ENCODE measurements at regions of chr5 and their contacts with region 1.

Region 1: GRCh38 chr5:180291943-180292831 is at the start of gene MAPK9:
- DNase-seq: no peak
- ATAC-seq: peak; percentile 94
- H3K4me3 ChIP-seq: peak within 1 kb of the TSS; percentile 69 to 84
- H3K27ac ChIP-seq: peak within 1 kb of the TSS; percentile 63; the same call in 1 of the 2 replicates
- H3K4me1 ChIP-seq: peaks cover 15% of the 10 kb centered on the region
- H3K27me3 ChIP-seq: no peaks in the 10 kb centered on the region
- CTCF ChIP-seq: no peak
- total RNA-seq, gene MAPK9: 44.1 TPM

Region 2: GRCh38 chr5:180315762-180316212 is 23.6 kb after region 1 on chr5:
- CTCF ChIA-PET with region 1: interaction called, 10 read pairs
- POLR2A ChIA-PET with region 1: no interaction called
- in situ Hi-C with region 1: no loop called
- intact Hi-C with region 1: no loop called
- DNase-seq: no peak
- ATAC-seq: peak; percentile 86
- H3K4me3 ChIP-seq: no peak overlapping the region
- H3K27ac ChIP-seq: no peak overlapping the region
- H3K4me1 ChIP-seq: no peaks in the 10 kb centered on the region
- H3K27me3 ChIP-seq: no peaks in the 10 kb centered on the region
- CTCF ChIP-seq: peak; percentile 98

Region 3: DNA sequence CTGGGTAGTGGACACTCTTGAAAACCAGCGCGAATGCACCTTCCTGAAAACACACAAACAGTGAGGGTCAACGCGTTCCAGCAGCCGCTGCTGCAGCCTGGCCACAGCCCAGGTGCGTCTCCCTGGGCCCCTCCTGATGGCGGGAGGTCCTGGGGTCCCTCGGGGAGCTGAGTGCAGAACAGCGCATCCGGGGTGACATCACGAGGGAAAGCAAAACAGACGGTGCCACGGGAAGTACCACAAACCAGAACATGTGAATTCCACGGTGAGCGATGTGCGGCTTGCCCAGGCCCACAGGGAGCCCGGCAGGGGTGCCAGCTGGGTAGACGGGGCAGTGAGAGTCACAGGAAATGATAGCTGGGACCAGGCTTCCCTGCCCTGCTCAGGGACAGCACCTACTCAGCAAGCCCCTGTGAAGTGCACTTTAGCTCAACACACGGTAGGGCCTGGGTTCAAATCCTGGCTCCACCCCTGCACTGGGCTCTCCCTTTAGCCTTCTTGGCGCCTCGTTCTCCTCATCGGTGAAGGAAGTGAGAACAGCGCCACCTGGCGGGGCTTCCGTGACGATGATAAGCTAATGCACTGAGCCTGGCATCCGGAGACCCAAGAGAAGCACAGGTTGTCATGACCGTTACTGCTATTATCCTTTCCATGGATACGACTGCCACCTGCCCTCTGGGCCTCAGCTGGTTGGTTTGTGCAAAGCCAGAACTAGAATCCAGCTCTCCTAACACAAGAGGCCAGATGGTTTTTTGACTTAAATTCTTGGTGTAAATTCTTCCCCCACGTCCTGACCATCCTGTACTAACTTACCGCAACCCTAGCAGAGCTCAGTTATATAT is 36.3 kb after region 1 on chr5:
- CTCF ChIA-PET with region 1: interaction called, 18 read pairs
- POLR2A ChIA-PET with region 1: no interaction called
- in situ Hi-C with region 1: no loop called
- intact Hi-C with region 1: loop called (anchors 5 kb)
- DNase-seq: peak; percentile 63
- ATAC-seq: peak; percentile 97
- H3K4me3 ChIP-seq: no peak overlapping the region
- H3K27ac ChIP-seq: no peak overlapping the region
- H3K4me1 ChIP-seq: peaks cover 3% of the 10 kb centered on the region
- H3K27me3 ChIP-seq: no peaks in the 10 kb centered on the region
- CTCF ChIP-seq: peak; percentile 90

Region 4: DNA sequence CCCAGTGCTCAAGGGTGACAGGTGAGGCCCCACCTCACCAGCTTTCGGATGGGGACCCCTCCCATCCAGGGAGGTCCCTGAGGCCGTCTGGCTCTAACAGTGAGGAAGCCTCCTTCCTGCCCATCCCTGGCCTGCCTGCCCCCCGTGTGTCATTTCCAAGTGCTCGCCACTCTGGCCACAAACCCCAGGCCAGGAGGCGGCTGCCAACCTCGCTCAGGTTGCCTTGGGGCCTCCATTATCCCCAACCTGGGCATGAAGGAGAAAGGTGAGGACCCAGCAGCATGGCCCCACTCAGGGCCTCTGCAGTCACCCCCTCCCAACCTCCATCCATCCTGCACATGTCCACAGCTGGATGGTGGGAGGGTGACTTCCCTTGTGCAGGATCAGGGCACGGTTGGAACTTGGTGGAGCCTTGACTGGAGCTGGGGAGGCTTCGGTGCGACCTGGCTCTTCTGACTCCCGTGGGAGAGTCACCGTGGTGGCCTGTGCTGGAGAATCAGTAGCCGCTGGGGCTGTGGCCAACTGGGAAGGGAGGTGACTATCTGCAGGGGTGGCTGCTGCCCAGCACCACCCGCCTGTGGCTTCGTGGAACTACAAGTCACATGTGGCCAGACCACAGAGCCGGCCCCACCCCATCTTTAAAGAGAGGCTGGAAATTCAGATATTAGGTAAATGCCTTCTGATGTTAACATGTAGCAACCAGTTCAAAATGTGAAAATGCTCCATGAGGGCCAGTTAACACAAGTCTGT is 98.4 kb after region 1 on chr5:
- CTCF ChIA-PET with region 1: no interaction called
- POLR2A ChIA-PET with region 1: no interaction called
- in situ Hi-C with region 1: no loop called
- intact Hi-C with region 1: no loop called
- DNase-seq: no peak
- ATAC-seq: no peak
- H3K4me3 ChIP-seq: no peak overlapping the region
- H3K27ac ChIP-seq: no peak overlapping the region
- H3K4me1 ChIP-seq: no peaks in the 10 kb centered on the region
- H3K27me3 ChIP-seq: no peaks in the 10 kb centered on the region
- CTCF ChIP-seq: no peak

Region 5: GRCh38 chr5:180470966-180471582 is 178.9 kb after region 1 on chr5:
- CTCF ChIA-PET with region 1: no interaction called
- POLR2A ChIA-PET with region 1: interaction called, 3 read pairs
- in situ Hi-C with region 1: no loop called
- intact Hi-C with region 1: loop called (anchors 1 kb)
- DNase-seq: peak; percentile 46
- ATAC-seq: peak; percentile 76
- H3K4me3 ChIP-seq: no peak overlapping the region
- H3K27ac ChIP-seq: no peak overlapping the region
- H3K4me1 ChIP-seq: no peaks in the 10 kb centered on the region
- H3K27me3 ChIP-seq: no peaks in the 10 kb centered on the region
- CTCF ChIP-seq: peak; percentile 95

Region 6: DNA sequence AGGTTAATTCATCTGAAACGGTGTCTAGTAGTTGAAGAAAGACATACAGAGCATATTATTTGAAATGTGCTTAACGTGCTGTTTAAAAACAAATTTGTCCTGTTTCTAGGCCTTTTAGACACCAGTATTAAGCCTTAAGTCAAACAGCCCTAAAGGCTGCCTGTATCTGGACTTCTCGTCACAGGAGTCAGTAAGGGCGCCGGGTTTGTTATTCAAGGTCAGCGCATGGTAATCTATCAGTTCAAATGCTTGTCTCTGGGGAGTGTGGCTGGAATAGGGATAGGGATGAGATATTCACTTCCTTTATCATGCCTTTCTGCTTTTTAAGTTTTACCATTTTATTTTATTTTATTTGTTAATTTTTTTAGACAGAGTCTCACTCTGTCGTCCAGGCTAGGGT is 192.6 kb after region 1 on chr5:
- CTCF ChIA-PET with region 1: interaction called, 13 read pairs
- POLR2A ChIA-PET with region 1: no interaction called
- in situ Hi-C with region 1: no loop called
- intact Hi-C with region 1: no loop called
- DNase-seq: no peak
- ATAC-seq: 0 out of 2 replicates have a peak, but pooled peaks have one; percentile 30
- H3K4me3 ChIP-seq: no peak overlapping the region
- H3K27ac ChIP-seq: no peak overlapping the region
- H3K4me1 ChIP-seq: no peaks in the 10 kb centered on the region
- H3K27me3 ChIP-seq: no peaks in the 10 kb centered on the region
- CTCF ChIP-seq: no peak